Activated B cell treated with CpG ODN at 0.5 μM for 24 hours (primary cell): ENCODE measurements at regions of chr4 and their contacts with region 1.

Region 1: GRCh38 chr4:139530833-139531427 is 25.1 kb downstream of the SETD7 start:
- DNase-seq: peak; percentile 19
- ATAC-seq: peak; percentile 60
- H3K4me3 Mint-ChIP-seq: no peak overlapping the region
- H3K27ac Mint-ChIP-seq: no peak overlapping the region
- H3K4me1 Mint-ChIP-seq: peaks cover 4% of the 10 kb centered on the region
- H3K27me3 Mint-ChIP-seq: no peaks in the 10 kb centered on the region
- CTCF ChIP-seq: no peak

Region 2: DNA sequence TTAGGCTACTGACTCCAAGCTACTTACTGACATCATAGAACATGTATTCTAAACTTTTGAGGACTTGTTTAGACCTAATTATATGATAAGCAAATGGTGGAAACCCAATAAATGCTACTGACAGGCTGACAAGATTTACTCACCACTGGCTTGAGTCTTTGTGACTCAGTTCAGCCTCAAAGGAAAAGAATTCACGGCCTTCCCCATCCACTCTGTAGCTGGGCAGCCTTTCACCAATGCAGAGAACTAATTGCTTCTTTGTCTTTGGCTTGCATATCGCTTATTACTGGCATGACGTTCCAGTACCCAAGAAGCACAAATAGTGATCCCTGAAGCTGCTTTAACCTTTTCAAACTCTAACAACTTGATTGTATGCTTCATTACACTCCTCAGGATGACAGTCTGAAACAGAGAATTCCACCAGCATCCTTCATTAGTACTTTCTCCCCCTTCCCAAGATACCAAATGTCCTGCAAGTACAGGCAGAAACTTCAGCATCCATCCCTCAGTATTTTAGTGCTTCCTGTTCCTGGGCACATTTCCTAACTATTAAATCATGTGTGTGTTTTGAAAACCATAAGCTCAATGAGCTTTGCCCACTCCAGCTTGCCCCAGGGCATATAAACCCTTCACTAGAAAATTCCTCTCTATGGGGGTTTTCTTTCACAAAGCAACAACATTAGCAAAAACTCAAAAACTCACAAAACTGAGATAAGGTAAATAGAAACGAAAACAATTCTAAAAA is 990.7 kb before region 1 on chr4:
- CTCF ChIA-PET with region 1: no interaction called
- POLR2A ChIA-PET with region 1: no interaction called
- intact Hi-C with region 1: no loop called
- DNase-seq: no peak
- ATAC-seq: no peak
- H3K4me3 Mint-ChIP-seq: no peak overlapping the region
- H3K27ac Mint-ChIP-seq: no peak overlapping the region
- H3K4me1 Mint-ChIP-seq: no peaks in the 10 kb centered on the region
- H3K27me3 Mint-ChIP-seq: no peaks in the 10 kb centered on the region
- CTCF ChIP-seq: no peak

Region 3: DNA sequence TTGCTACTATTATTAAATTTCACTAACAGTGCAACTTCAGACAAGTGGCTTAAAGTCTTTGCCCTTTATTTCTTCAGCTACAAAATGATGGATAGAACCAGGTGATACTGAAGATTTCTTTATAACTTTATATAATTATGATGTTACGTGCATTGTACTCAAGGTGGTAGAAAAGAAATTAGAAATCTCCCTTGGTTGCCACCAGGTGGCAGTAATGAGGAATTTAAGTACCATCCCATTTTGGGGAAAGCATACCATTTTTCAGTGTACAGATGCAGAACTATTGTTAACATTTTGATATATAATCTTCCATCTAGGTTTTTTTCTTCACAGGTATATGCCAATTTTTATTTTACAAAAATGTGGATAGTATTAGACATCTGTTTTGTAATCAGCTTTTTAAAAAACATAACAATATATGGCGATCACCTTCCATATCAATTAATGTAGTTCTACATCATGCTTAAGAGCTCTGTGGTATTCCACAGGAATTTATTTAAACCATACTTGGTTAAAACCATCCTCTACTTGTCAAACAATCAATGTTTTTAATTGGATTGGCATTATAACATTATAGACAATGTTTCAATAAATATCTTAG is 114.8 kb before region 1 on chr4:
- CTCF ChIA-PET with region 1: interaction called, 4 read pairs
- POLR2A ChIA-PET with region 1: no interaction called
- intact Hi-C with region 1: loop called (anchors 1 kb)
- DNase-seq: no peak
- ATAC-seq: no peak
- H3K4me3 Mint-ChIP-seq: no peak overlapping the region
- H3K27ac Mint-ChIP-seq: no peak overlapping the region
- H3K4me1 Mint-ChIP-seq: peaks cover 19% of the 10 kb centered on the region
- H3K27me3 Mint-ChIP-seq: no peaks in the 10 kb centered on the region
- CTCF ChIP-seq: peak; percentile 99

Region 4: GRCh38 chr4:139619644-139620043 is 88.7 kb after region 1 on chr4:
- CTCF ChIA-PET with region 1: no interaction called
- POLR2A ChIA-PET with region 1: no interaction called
- intact Hi-C with region 1: no loop called
- DNase-seq: no peak
- ATAC-seq: peak; percentile 31
- H3K4me3 Mint-ChIP-seq: no peak overlapping the region
- H3K27ac Mint-ChIP-seq: no peak overlapping the region
- H3K4me1 Mint-ChIP-seq: no peaks in the 10 kb centered on the region
- H3K27me3 Mint-ChIP-seq: peaks cover 12% of the 10 kb centered on the region
- CTCF ChIP-seq: no peak